K562 (cell line): ENCODE measurements at regions of chr15 and their contacts with region 1.

Region 1: DNA sequence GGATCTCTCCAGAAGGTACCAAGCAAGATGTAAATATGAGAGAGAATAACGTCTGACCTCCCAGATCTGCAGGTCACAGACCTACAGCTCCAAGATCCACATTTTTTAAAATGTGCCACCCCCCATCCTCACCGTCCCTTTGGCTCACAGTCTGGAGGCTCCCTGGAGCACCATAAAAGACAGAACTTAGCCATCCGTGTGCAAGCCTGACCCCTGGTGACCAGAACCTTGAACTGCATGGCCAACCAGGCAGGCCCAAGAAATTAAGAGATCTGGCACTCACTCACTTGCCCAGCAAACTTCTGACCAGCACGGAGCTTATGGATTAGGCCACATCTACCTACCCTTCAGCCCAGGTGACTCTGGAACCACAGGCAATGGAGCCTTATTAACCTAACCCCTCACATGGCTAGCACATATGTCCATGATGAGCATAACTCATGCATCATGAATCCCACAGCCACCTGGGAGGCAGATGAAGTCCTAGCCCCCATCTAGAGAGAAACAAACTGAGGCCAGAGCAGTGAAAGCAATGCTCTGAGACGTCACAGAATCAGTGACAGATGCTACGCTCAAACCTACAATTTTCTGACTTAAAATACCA is 275.3 kb downstream of the UACA start:
- DNase-seq: peak; percentile 69 to 79 (median 77)
- ATAC-seq: peak; percentile 85
- H3K4me3 ChIP-seq: no peak overlapping the region
- H3K27ac ChIP-seq: no peak overlapping the region
- H3K4me1 ChIP-seq: peaks cover 0 to 5% of the 10 kb centered on the region in 2 experiments; a peak in 3 of 5 replicates
- H3K27me3 ChIP-seq: peaks cover 16 to 39% of the 10 kb centered on the region in 2 experiments; a peak in 4 of 5 replicates
- CTCF ChIP-seq: peak; percentile 78 to 95 (median 88)
- EP300 ChIP-seq: no peak
- POLR2A ChIP-seq: no peak
- RAD21 ChIP-seq: peak; percentile 85 to 92

Region 2: DNA sequence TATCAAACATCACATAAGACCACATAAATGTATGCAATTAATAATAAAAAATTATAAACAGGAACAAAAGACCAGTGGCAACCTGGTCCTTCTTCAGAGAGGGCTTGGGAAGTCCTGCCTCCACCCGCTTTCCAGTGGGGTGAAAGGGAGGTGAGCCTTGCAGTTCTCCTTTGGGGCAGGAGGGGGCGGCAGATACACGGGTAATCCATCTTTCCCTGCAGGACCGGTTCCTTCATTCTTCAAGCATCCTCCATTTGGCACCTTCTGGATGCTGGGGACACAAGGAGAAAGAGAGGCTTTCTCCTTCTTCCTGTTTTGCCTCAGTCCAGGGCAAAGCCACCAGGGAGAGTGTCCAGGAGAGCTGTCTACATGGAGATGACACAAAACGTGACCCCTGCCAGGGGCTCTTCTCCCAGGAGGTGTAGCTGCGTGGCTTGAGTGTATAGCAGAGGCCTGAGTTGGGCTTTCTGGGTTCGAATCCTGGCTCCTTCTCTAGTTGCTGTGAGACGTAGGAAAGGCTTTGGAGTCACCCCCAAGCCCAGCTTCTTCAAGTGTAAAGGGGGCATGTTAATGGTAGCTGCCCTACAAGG is 1012.2 kb before region 1 on chr15:
- CTCF ChIA-PET with region 1: interaction called, 9 read pairs
- POLR2A ChIA-PET with region 1: no interaction called
- in situ Hi-C with region 1: loop called (anchors 10 kb)
- intact Hi-C with region 1: loop called (anchors 2 kb)
- DNase-seq: peak; percentile 75 to 85 (median 81)
- ATAC-seq: peak; percentile 95
- H3K4me3 ChIP-seq: no peak overlapping the region
- H3K27ac ChIP-seq: no peak overlapping the region
- H3K4me1 ChIP-seq: no peaks in the 10 kb centered on the region
- H3K27me3 ChIP-seq: peaks cover 6 to 24% of the 10 kb centered on the region in 2 experiments; a peak in 4 of 5 replicates
- CTCF ChIP-seq: peak; percentile 87 to 95 (median 93)
- EP300 ChIP-seq: no peak
- POLR2A ChIP-seq: no peak
- RAD21 ChIP-seq: peak; percentile 83 to 88

Region 3: GRCh38 chr15:69719527-69720240 is 768.4 kb before region 1 on chr15:
- CTCF ChIA-PET with region 1: no interaction called
- POLR2A ChIA-PET with region 1: no interaction called
- in situ Hi-C with region 1: no loop called
- intact Hi-C with region 1: loop called (anchors 5 kb)
- DNase-seq: no peak
- ATAC-seq: no peak
- H3K4me3 ChIP-seq: no peak overlapping the region
- H3K27ac ChIP-seq: no peak overlapping the region
- H3K4me1 ChIP-seq: peaks cover 0 to 4% of the 10 kb centered on the region in 2 experiments; a peak in 2 of 5 replicates
- H3K27me3 ChIP-seq: peaks cover 0 to 17% of the 10 kb centered on the region in 2 experiments; a peak in 2 of 5 replicates
- CTCF ChIP-seq: no peak
- EP300 ChIP-seq: no peak
- POLR2A ChIP-seq: no peak
- RAD21 ChIP-seq: no peak

Region 4: GRCh38 chr15:69729161-69729748 is 758.8 kb before region 1 on chr15:
- CTCF ChIA-PET with region 1: no interaction called
- POLR2A ChIA-PET with region 1: no interaction called
- in situ Hi-C with region 1: loop called (anchors 25 kb)
- intact Hi-C with region 1: loop called (anchors 5 kb)
- DNase-seq: peak; percentile 41 to 59 (median 50)
- ATAC-seq: peak; percentile 57; the same call in 2 of the 3 replicates
- H3K4me3 ChIP-seq: no peak overlapping the region
- H3K27ac ChIP-seq: no peak overlapping the region
- H3K4me1 ChIP-seq: no peaks in the 10 kb centered on the region
- H3K27me3 ChIP-seq: no peaks in the 10 kb centered on the region; a peak in 4 of 5 replicates
- CTCF ChIP-seq: peak; percentile 64 to 78 (median 69)
- EP300 ChIP-seq: no peak
- POLR2A ChIP-seq: no peak
- RAD21 ChIP-seq: peak; percentile 43 to 69

Region 5: DNA sequence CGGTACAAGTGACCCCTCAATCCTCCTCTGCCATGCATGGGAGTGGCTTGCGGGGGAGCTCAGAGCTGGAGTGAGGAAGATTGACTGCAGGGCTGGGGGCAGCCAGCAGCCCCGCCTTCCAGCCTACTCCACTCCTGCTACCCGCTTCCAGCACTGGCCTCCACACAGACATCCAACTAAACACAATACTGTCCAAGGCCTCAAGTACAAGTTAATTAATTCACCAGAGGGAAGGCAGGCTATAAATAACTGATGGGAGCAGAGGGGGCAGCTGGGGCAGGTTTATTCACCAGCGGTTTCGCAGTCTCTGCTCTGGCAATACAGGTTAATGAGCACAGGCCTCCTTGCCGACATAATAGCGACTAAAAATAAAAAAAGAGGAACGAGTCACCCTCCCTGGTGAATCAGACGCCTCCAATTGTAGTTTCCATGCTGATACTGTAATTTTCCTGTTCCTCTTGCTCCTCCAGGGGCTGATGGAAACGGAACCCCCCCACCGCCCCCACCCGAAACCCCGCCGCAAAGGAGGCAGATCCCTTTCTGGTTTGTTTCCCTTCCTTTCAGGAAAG is 224.0 kb before region 1 on chr15:
- CTCF ChIA-PET with region 1: no interaction called
- POLR2A ChIA-PET with region 1: no interaction called
- in situ Hi-C with region 1: no loop called
- intact Hi-C with region 1: loop called (anchors 10 kb)
- DNase-seq: no peak
- ATAC-seq: no peak
- H3K4me3 ChIP-seq: no peak overlapping the region
- H3K27ac ChIP-seq: no peak overlapping the region
- H3K4me1 ChIP-seq: peaks cover under 1 to 2% of the 10 kb centered on the region in 2 experiments; a peak in 2 of 5 replicates
- H3K27me3 ChIP-seq: peaks cover 12 to 43% of the 10 kb centered on the region in 2 experiments; a peak in 3 of 5 replicates
- CTCF ChIP-seq: no peak
- EP300 ChIP-seq: no peak
- POLR2A ChIP-seq: no peak
- RAD21 ChIP-seq: no peak

Region 6: GRCh38 chr15:70617076-70617910 is 129.2 kb after region 1 on chr15:
- CTCF ChIA-PET with region 1: no interaction called
- POLR2A ChIA-PET with region 1: no interaction called
- in situ Hi-C with region 1: no loop called
- intact Hi-C with region 1: no loop called
- DNase-seq: no peak
- ATAC-seq: no peak
- H3K4me3 ChIP-seq: no peak overlapping the region
- H3K27ac ChIP-seq: no peak overlapping the region
- H3K4me1 ChIP-seq: no peaks in the 10 kb centered on the region
- H3K27me3 ChIP-seq: no peaks in the 10 kb centered on the region
- CTCF ChIP-seq: no peak
- EP300 ChIP-seq: no peak
- POLR2A ChIP-seq: no peak
- RAD21 ChIP-seq: no peak